ENCODE measurements at regions of chr18 and their contacts with region 1.

Region 1: DNA sequence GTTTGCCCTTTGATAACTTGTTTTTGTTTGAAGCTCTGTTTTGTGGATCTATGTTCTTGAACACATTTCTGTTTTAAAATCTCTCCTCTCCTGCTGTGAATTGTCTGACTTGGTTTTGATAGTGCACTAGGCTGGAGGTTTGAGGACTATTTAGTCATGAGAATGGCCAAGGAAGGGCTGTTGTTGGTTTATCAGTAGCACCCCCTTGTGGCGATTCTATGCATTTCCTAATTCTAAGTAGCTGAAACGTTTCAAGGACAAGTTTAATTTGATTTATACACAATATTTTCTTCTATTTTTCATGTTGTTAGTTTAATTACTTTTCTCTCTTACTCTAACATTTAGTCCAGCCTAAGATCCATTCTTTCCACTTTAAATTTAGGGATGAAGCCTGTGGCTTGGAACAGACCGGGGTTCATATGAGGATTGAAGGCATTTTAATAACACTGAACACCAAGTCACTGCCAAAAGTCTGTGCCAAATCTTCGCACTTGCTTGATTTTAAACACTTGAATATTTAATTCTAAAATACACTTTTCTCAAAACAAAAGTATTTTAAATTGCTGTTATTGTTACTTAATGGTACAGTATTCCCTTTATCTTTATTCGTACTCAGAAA is 166.0 kb downstream of the SOCS6 start:
- DNase-seq: no peak
- ATAC-seq: peak; percentile 87
- H3K4me3 ChIP-seq: no peak overlapping the region
- H3K27ac ChIP-seq: no peak overlapping the region
- H3K4me1 ChIP-seq: no peaks in the 10 kb centered on the region
- H3K27me3 ChIP-seq: no peaks in the 10 kb centered on the region; a peak in 1 of 4 replicates
- CTCF ChIP-seq: peak; percentile 64 to 72 (median 70); a peak in 5 of 6 replicates
- EP300 ChIP-seq: no peak
- POLR2A ChIP-seq: no peak
- RAD21 ChIP-seq: peak; percentile 68

Region 2: GRCh38 chr18:69636529-69637301 is 818.1 kb before region 1 on chr18:
- CTCF ChIA-PET with region 1: interaction called, 4 read pairs
- POLR2A ChIA-PET with region 1: no interaction called
- RAD21 ChIA-PET with region 1: no interaction called
- SMC1A ChIA-PET with region 1: no interaction called
- in situ Hi-C with region 1: no loop called
- intact Hi-C with region 1: loop called (anchors 10 kb)
- DNase-seq: no peak
- ATAC-seq: peak; percentile 95
- H3K4me3 ChIP-seq: no peak overlapping the region
- H3K27ac ChIP-seq: no peak overlapping the region
- H3K4me1 ChIP-seq: no peaks in the 10 kb centered on the region
- H3K27me3 ChIP-seq: no peaks in the 10 kb centered on the region
- CTCF ChIP-seq: peak; percentile 41 to 48 (median 45)
- EP300 ChIP-seq: no peak
- POLR2A ChIP-seq: no peak
- RAD21 ChIP-seq: peak; percentile 80

Region 3: DNA sequence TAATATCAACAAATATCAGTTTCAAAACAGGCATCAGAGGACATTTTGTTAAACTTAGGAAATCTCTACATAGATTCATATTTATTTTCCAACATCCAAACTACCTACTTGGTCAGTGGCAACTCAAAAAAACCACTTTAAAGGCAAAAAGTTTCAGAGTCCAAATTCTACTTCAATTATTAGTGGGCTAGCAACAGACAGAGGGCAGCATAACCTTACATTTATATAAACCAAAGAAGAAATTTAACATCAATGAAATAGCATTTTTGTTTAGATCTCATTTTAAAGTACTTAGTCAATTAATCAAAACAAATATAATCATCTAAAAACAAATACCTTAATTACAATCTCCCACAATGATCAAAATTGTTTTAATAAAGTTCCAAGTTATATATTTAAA is 282.6 kb before region 1 on chr18:
- CTCF ChIA-PET with region 1: interaction called, 9 read pairs
- POLR2A ChIA-PET with region 1: no interaction called
- RAD21 ChIA-PET with region 1: no interaction called
- SMC1A ChIA-PET with region 1: interaction called, 9 read pairs
- in situ Hi-C with region 1: no loop called
- intact Hi-C with region 1: loop called (anchors 1 kb)
- DNase-seq: no peak
- ATAC-seq: peak; percentile 41; the same call in 1 of the 3 replicates
- H3K4me3 ChIP-seq: no peak overlapping the region
- H3K27ac ChIP-seq: no peak overlapping the region
- H3K4me1 ChIP-seq: no peaks in the 10 kb centered on the region
- H3K27me3 ChIP-seq: no peaks in the 10 kb centered on the region
- CTCF ChIP-seq: peak; percentile 13 to 52 (median 26); a peak in 4 of 6 replicates
- EP300 ChIP-seq: no peak
- POLR2A ChIP-seq: no peak
- RAD21 ChIP-seq: peak; percentile 65

Region 4: GRCh38 chr18:70442933-70443332 is 11.9 kb before region 1 on chr18:
- CTCF ChIA-PET with region 1: interaction called, 13 read pairs
- POLR2A ChIA-PET with region 1: no interaction called
- RAD21 ChIA-PET with region 1: interaction called, 4 read pairs
- SMC1A ChIA-PET with region 1: interaction called, 3 read pairs
- in situ Hi-C with region 1: no loop called
- intact Hi-C with region 1: no loop called
- DNase-seq: no peak
- ATAC-seq: no peak
- H3K4me3 ChIP-seq: no peak overlapping the region
- H3K27ac ChIP-seq: no peak overlapping the region
- H3K4me1 ChIP-seq: no peaks in the 10 kb centered on the region
- H3K27me3 ChIP-seq: no peaks in the 10 kb centered on the region; a peak in 1 of 4 replicates
- CTCF ChIP-seq: no peak
- EP300 ChIP-seq: no peak
- POLR2A ChIP-seq: no peak
- RAD21 ChIP-seq: no peak

Region 5: GRCh38 chr18:70848329-70848728 is 393.5 kb after region 1 on chr18:
- CTCF ChIA-PET with region 1: no interaction called
- POLR2A ChIA-PET with region 1: no interaction called
- RAD21 ChIA-PET with region 1: no interaction called
- SMC1A ChIA-PET with region 1: no interaction called
- in situ Hi-C with region 1: no loop called
- intact Hi-C with region 1: no loop called
- DNase-seq: no peak
- ATAC-seq: no peak
- H3K4me3 ChIP-seq: no peak overlapping the region
- H3K27ac ChIP-seq: no peak overlapping the region
- H3K4me1 ChIP-seq: no peaks in the 10 kb centered on the region
- H3K27me3 ChIP-seq: no peaks in the 10 kb centered on the region
- CTCF ChIP-seq: no peak
- EP300 ChIP-seq: no peak
- POLR2A ChIP-seq: no peak
- RAD21 ChIP-seq: no peak

Measured in GM12878 (cell line).